ENCODE measurements at regions of chr11 and their contacts with region 1.

Region 1: DNA sequence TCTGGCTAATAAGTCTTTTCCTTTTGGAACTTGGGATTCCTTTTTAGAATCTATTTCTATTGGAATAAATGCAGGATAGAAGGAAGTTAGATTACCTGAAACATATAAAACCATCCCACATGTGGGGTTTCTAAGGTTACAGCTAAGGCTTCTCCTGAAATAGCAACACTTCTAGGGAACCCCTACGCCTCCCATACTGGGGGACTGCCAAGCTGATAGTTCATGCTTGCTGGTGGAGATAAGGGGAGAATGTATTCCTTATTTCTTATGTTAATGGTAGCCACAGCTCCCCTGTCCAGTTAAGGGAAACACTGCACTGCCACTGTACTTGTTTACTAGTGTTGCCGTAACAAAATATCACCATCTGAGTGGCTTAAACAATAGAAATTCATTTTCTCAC is 1189.6 kb downstream of the LRRC4C start:
- DNase-seq: no peak
- H3K4me3 ChIP-seq: no peak overlapping the region
- H3K27ac ChIP-seq: no peak overlapping the region
- H3K4me1 ChIP-seq: no peaks in the 10 kb centered on the region
- H3K27me3 ChIP-seq: no peaks in the 10 kb centered on the region
- CTCF ChIP-seq: no peak
- POLR2A ChIP-seq: no peak

Region 2: GRCh38 chr11:38900211-38900610 is 1369.7 kb before region 1 on chr11:
- intact Hi-C with region 1: no loop called
- DNase-seq: no peak
- H3K4me3 ChIP-seq: no peak overlapping the region
- H3K27ac ChIP-seq: no peak overlapping the region
- H3K4me1 ChIP-seq: no peaks in the 10 kb centered on the region
- H3K27me3 ChIP-seq: no peaks in the 10 kb centered on the region
- CTCF ChIP-seq: no peak
- POLR2A ChIP-seq: no peak

Region 3: GRCh38 chr11:40215556-40215955 is 54.3 kb before region 1 on chr11:
- intact Hi-C with region 1: loop called (anchors 2 kb)
- DNase-seq: no peak
- H3K4me3 ChIP-seq: no peak overlapping the region
- H3K27ac ChIP-seq: no peak overlapping the region
- H3K4me1 ChIP-seq: no peaks in the 10 kb centered on the region
- H3K27me3 ChIP-seq: no peaks in the 10 kb centered on the region
- CTCF ChIP-seq: no peak
- POLR2A ChIP-seq: no peak

Measured in breast epithelium (tissue), 4 donors.